Cardiac septum (tissue), 1 donor: ENCODE measurements at regions of chr11 and their contacts with region 1.

Region 1: GRCh38 chr11:74726547-74727182 is 4.6 kb downstream of the CHRDL2 start:
- DNase-seq: peak; percentile 84

Region 2: GRCh38 chr11:74466916-74467885 is 259.5 kb before region 1 on chr11 and contains the start of gene KCNE3:
- intact Hi-C with region 1: loop called (anchors 10 kb)
- DNase-seq: peak; percentile 76
- total RNA-seq, gene KCNE3: 2.1 TPM

Region 3: DNA sequence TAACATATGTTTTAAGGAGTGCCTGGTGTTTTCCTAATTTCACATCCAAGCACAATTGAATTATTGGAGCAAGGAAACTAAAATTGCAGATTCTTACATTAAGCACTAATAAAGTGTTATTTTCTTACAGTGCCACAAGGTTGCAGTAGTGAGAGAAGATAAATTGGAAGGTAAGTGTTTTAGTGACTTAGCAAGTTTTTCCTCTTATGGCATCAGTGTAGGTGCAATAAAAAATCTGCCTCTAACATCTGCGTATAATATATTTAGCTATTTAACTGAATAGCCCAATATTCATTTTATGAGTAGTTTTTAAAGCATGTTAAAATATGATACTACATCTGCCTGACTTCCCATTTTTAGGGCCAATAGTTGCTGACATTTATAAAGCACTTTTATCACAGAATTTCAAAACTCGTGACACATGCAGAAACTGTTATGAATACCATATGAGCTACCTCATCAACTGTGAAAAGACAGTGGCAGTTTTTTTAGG is 115.2 kb before region 1 on chr11:
- intact Hi-C with region 1: loop called (anchors 5 kb)
- DNase-seq: no peak

Region 4: GRCh38 chr11:74634537-74634936 is 92.1 kb before region 1 on chr11:
- intact Hi-C with region 1: loop called (anchors 5 kb)
- DNase-seq: no peak